ENCODE measurements at regions of chr17 and their contacts with region 1.

Region 1: DNA sequence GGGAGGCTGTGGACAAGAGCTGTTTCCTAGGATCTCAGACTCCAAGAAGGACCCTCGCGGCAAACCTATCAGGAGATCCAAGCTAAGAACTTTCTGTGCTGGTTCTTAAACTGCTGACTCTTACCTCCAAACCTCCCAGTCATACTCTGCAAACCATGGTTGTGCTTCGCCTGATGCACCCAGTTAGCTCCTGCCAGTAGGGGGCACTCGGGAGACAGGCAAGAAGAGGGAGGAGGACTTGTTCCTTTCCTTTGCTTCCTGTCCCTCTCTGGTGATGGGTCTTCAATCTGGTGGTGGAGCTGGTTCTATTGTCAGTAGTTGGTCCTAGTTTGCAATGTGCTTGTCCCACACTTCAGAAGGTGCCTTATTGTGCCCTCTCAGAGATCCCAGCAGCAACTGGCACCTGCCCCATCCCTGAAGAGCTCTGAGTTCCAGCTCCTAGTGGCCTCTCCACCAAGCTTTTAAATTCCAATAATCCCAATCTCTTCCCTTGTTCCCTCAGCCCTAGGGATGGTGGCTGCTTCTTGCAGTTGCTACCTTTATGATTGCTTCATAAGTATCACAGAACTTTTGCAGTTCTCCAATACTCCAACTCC is 113.5 kb upstream of the RPL38 start:
- DNase-seq: peak; percentile 35
- ATAC-seq: peak; percentile 79
- H3K4me3 ChIP-seq: no peak overlapping the region
- H3K27ac ChIP-seq: no peak overlapping the region
- H3K4me1 ChIP-seq: no peaks in the 10 kb centered on the region
- H3K27me3 ChIP-seq: peaks cover 25% of the 10 kb centered on the region
- CTCF ChIP-seq: peak; percentile 89

Region 2: GRCh38 chr17:74176546-74177001 is 86.6 kb after region 1 on chr17:
- CTCF ChIA-PET with region 1: interaction called, 3 read pairs
- POLR2A ChIA-PET with region 1: no interaction called
- in situ Hi-C with region 1: no loop called
- intact Hi-C with region 1: loop called (anchors 5 kb)
- DNase-seq: no peak
- ATAC-seq: peak; percentile 93
- H3K4me3 ChIP-seq: no peak overlapping the region
- H3K27ac ChIP-seq: no peak overlapping the region
- H3K4me1 ChIP-seq: no peaks in the 10 kb centered on the region
- H3K27me3 ChIP-seq: peaks cover 20% of the 10 kb centered on the region
- CTCF ChIP-seq: peak; percentile 92

Region 3: DNA sequence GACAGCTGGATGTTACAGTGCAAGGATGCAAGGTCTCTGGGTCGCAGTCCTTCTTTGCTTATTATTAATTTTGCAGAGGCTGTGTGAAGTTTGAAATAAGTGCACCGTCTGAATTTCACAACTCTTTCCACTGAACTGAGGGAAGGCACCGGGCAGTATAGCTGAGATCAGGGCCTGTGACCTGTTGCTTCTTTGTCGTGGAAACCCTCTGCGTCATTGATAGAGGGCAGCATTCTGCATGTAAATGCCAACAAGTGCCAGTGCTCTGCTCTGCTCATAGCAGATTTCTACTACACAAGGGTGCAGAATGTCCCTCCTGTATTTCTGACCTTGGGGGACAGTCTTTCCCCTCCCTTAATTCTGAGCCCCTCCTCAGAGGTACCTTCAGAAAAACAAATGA is 596.8 kb after region 1 on chr17:
- CTCF ChIA-PET with region 1: no interaction called
- POLR2A ChIA-PET with region 1: no interaction called
- in situ Hi-C with region 1: no loop called
- intact Hi-C with region 1: no loop called
- DNase-seq: no peak
- ATAC-seq: peak; percentile 77; the same call in 1 of the 2 replicates
- H3K4me3 ChIP-seq: no peak overlapping the region
- H3K27ac ChIP-seq: no peak overlapping the region
- H3K4me1 ChIP-seq: no peaks in the 10 kb centered on the region
- H3K27me3 ChIP-seq: peaks cover 4% of the 10 kb centered on the region
- CTCF ChIP-seq: no peak; the same call in 1 of the 2 replicates